ENCODE measurements at regions of chr5 and their contacts with region 1.

Region 1: GRCh38 chr5:75681125-75681830 is 36.0 kb downstream of the POC5 start:
- H3K4me3 ChIP-seq: no peak overlapping the region
- H3K27ac ChIP-seq: no peak overlapping the region
- H3K4me1 ChIP-seq: no peaks in the 10 kb centered on the region
- CTCF ChIP-seq: no peak

Region 2: GRCh38 chr5:75236322-75237316 is 444.7 kb before region 1 on chr5 and contains the start of gene ANKRD31:
- CTCF ChIA-PET with region 1: interaction called, 12 read pairs
- POLR2A ChIA-PET with region 1: interaction called, 4 read pairs
- H3K4me3 ChIP-seq: peak within 1 kb of the TSS; percentile 84
- H3K27ac ChIP-seq: peak within 1 kb of the TSS; percentile 40; the same call in 1 of the 2 replicates
- H3K4me1 ChIP-seq: peaks cover 4% of the 10 kb centered on the region
- CTCF ChIP-seq: no peak; the same call in 1 of the 2 replicates